Heart left ventricle (tissue), 16 donors: ENCODE measurements at regions of chr15 and their contacts with region 1.

Region 1: DNA sequence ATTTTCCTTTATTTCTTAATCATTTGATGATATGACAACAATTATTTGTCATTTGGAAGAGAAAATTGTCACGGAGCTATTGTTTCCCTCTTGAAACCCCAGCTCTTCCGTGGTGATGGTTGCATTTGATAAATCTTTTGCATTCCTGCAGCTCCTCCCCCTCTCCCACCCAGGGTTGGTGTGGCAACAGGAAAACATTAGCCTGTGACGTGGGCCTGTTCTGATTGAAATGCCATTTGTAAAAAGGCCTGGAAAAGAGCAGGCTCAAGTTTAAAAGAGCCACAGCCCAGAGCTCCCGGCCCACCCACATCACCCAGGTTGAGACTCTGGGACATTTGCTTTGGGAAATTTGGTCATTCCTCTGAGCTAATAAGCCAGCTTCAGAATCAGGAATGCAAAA is 282.5 kb downstream of the RPLP1 start:
- DNase-seq: no peak
- ATAC-seq: no peak
- H3K4me3 ChIP-seq: no peak overlapping the region
- H3K27ac ChIP-seq: no peak overlapping the region
- H3K4me1 ChIP-seq: peaks cover 0 to 5% (median 0%) of the 10 kb centered on the region in 12 donors
- H3K27me3 ChIP-seq: peaks cover 0 to 11% (median 0%) of the 10 kb centered on the region in 9 donors
- CTCF ChIP-seq: no peak
- POLR2A ChIP-seq: no peak

Region 2: GRCh38 chr15:69666411-69666882 is 68.7 kb before region 1 on chr15:
- intact Hi-C with region 1: no loop called
- DNase-seq: peak in 4 of 5 donors; percentile 20 to 44 (median 34)
- ATAC-seq: peak; percentile 39 to 64 (median 50)
- H3K4me3 ChIP-seq: no peak overlapping the region
- H3K27ac ChIP-seq: peak overlapping the region in 1 of 12 donors; percentile 76
- H3K4me1 ChIP-seq: peaks cover 0 to 47% (median 4%) of the 10 kb centered on the region in 12 donors
- H3K27me3 ChIP-seq: peaks cover 0 to 26% (median 6%) of the 10 kb centered on the region in 9 donors
- CTCF ChIP-seq: no peak
- POLR2A ChIP-seq: no peak

Region 3: DNA sequence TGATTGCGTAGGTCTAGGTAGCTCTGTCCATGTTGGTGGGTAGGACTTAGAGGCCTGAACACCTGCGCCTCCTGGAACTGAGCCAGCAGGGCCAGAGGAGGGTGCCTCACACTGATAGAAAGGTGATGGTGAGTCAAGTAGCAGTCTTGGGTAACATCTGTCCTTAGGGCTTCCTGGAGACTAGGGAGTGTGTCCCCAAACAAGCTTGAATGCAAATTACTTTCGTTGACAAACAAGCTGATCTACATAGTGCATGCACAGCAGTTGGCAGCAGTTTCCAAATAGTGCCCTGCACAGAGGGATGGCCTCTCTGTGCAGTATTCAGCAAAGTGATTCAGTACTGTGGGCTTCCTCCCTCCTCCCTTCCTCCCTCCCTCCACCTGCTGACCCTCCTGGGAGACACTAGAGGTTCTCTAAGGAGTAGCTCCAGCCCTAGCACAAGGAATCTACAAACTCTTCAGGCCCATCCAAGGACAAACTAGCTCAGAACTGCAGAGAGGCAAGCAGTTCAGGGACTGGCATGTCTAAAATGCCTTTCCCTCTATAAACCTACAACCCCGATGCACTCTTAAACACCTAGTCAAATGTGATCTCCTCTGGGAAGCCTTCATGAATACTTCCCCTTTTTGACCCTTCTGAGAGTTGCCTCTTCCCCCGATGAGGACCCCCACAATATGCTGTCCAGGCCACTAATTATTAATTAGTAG is 301.6 kb after region 1 on chr15:
- intact Hi-C with region 1: no loop called
- DNase-seq: peak in 1 of 5 donors; percentile 9
- ATAC-seq: no peak
- H3K4me3 ChIP-seq: no peak overlapping the region
- H3K27ac ChIP-seq: no peak overlapping the region
- H3K4me1 ChIP-seq: peaks cover 0 to 9% (median 0%) of the 10 kb centered on the region in 12 donors
- H3K27me3 ChIP-seq: peaks cover 0 to 33% (median 12%) of the 10 kb centered on the region in 9 donors
- CTCF ChIP-seq: no peak
- POLR2A ChIP-seq: no peak

Region 4: GRCh38 chr15:70355275-70355795 is 620.2 kb after region 1 on chr15:
- intact Hi-C with region 1: loop called in 4 of 10 experiments (anchors 5 to 10 kb)
- DNase-seq: no peak
- ATAC-seq: no peak
- H3K4me3 ChIP-seq: no peak overlapping the region
- H3K27ac ChIP-seq: no peak overlapping the region
- H3K4me1 ChIP-seq: no peaks in the 10 kb centered on the region
- H3K27me3 ChIP-seq: peaks cover 0 to 6% (median 0%) of the 10 kb centered on the region in 9 donors
- CTCF ChIP-seq: no peak
- POLR2A ChIP-seq: no peak

Region 5: DNA sequence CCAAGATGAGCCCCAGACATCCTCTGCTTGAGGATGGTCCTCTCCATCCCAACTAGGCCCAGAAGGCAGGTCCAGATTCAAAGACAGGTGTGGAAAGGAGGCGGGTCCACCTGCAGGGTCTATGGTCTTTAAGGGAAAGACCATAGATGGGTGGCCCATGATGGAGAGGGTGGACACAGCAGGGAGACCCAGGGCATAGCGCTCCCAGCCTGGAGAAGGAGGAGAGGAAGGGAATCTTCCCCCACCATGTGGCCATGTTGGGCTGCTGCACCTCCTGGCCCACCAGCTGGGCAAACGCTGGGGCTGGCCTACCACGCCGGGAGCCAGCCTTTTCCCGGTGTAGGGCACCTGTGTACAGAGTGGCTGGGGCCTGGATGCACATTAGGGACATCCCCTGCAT is 627.8 kb after region 1 on chr15:
- intact Hi-C with region 1: loop called in 4 of 10 experiments (anchors 5 to 10 kb)
- DNase-seq: peak in 4 of 5 donors; percentile 35 to 70 (median 40)
- ATAC-seq: peak in 3 of 4 donors; percentile 82 to 89 (median 87)
- H3K4me3 ChIP-seq: no peak overlapping the region
- H3K27ac ChIP-seq: no peak overlapping the region
- H3K4me1 ChIP-seq: no peaks in the 10 kb centered on the region
- H3K27me3 ChIP-seq: peaks cover 0 to 16% (median 0%) of the 10 kb centered on the region in 9 donors
- CTCF ChIP-seq: peak; percentile 68 to 82 (median 71)
- POLR2A ChIP-seq: no peak

Region 6: DNA sequence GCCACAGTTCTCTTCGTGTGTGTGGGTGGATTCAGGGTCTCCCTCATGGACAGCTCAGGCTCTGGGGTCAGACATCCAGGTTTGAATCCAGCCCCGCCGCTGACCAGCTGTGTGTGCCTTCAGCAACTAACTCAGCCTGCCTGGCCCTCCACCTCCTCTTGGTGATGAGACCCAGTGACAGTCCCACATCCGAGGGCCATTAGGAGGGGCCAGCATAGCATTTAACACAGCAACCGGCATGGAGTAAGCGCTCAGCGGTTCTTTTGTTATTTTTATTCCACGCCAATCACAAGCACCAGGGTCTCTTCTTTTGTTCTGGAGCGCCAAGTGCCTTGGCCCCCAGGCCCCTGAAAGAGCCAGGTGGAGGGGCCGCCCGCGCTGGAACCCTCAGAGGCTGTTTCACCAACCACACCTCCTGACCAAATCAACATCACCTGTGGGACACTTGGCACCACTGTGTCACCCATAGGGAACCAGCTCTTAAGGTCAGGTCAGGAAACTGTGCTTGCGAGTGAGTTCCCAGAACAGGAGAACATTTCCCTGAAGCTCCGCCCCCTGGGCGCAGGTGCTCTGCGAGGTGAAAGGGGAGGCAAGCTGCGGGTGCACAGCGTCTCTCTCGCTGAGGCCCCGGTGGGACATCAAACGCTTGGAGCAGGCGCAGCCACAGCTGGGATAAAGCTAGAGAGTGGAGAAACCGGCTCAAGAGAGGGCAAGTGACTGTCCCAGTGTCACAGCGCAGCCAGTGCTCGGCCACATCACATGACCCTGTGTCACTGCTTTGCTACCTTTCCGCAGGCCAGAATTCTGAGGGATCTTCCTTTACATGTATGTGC is 716.9 kb after region 1 on chr15:
- intact Hi-C with region 1: loop called in 1 of 10 experiments (anchors 5 kb)
- DNase-seq: no peak
- ATAC-seq: no peak
- H3K4me3 ChIP-seq: no peak overlapping the region
- H3K27ac ChIP-seq: no peak overlapping the region
- H3K4me1 ChIP-seq: peaks cover 0 to 17% (median 10%) of the 10 kb centered on the region in 12 donors
- H3K27me3 ChIP-seq: peaks cover 0 to 8% (median 0%) of the 10 kb centered on the region in 9 donors
- CTCF ChIP-seq: no peak
- POLR2A ChIP-seq: no peak

Region 7: DNA sequence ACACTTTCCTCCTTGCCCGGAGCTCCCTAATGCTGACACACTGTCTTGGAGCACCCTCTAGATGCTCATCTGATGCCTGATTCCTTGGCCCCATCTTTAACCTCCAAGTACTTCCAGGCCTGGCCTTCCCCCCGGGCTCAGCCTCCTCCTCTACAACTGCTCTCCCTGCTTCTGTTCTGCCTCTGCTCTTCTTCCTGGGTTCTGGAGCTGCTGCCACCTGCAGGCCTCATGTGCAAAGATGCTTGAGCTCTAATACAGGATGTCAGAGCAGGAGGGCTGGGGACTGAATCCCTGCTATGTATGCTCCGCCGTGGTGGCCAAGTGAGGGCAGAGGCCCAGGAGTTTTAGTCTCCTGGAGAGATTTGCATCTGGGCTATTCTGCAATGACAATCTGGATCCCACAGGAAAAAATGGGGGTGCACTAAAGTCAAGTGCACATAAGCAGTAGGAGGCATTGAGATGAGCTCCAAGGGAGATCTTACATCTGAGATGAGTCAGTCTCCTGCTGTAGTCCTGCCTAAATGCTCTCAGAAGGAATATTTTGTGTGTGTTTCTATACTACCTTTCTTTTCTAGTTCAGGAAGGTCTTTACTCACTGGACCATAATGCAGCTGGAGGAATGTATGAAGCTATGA is 731.9 kb after region 1 on chr15:
- intact Hi-C with region 1: loop called in 4 of 10 experiments (anchors 5 to 10 kb)
- DNase-seq: peak in 4 of 5 donors; percentile 33 to 68 (median 41)
- ATAC-seq: peak; percentile 62 to 84 (median 74)
- H3K4me3 ChIP-seq: no peak overlapping the region
- H3K27ac ChIP-seq: no peak overlapping the region
- H3K4me1 ChIP-seq: peaks cover 0 to 15% (median 0%) of the 10 kb centered on the region in 12 donors
- H3K27me3 ChIP-seq: peaks cover 0 to 23% (median 2%) of the 10 kb centered on the region in 9 donors
- CTCF ChIP-seq: peak; percentile 39 to 71 (median 50)
- POLR2A ChIP-seq: no peak

Region 8: GRCh38 chr15:70474471-70475396 is 739.6 kb after region 1 on chr15:
- intact Hi-C with region 1: loop called in 4 of 10 experiments (anchors 5 to 10 kb)
- DNase-seq: peak; percentile 34 to 79 (median 45)
- ATAC-seq: peak in 3 of 4 donors; percentile 38 to 68 (median 55)
- H3K4me3 ChIP-seq: peak overlapping the region in 8 of 12 donors; percentile 5 to 37 (median 19)
- H3K27ac ChIP-seq: peak overlapping the region in 11 of 12 donors; percentile 1 to 94 (median 45)
- H3K4me1 ChIP-seq: peaks cover 0 to 45% (median 14%) of the 10 kb centered on the region in 12 donors
- H3K27me3 ChIP-seq: peaks cover 0 to 7% (median 0%) of the 10 kb centered on the region in 9 donors
- CTCF ChIP-seq: no peak
- POLR2A ChIP-seq: no peak

Region 9: GRCh38 chr15:70488002-70488605 is 753.0 kb after region 1 on chr15:
- intact Hi-C with region 1: loop called in 1 of 10 experiments (anchors 10 kb)
- DNase-seq: peak; percentile 58 to 82 (median 62)
- ATAC-seq: peak; percentile 29 to 75 (median 60)
- H3K4me3 ChIP-seq: no peak overlapping the region
- H3K27ac ChIP-seq: peak overlapping the region in 1 of 12 donors; percentile 76
- H3K4me1 ChIP-seq: peaks cover 0 to 74% (median 0%) of the 10 kb centered on the region in 12 donors
- H3K27me3 ChIP-seq: peaks cover 0 to 6% (median 0%) of the 10 kb centered on the region in 9 donors
- CTCF ChIP-seq: peak; percentile 91 to 97 (median 95)
- POLR2A ChIP-seq: no peak